Posterior cingulate gyrus (tissue), 11 donors: ENCODE measurements at regions of chr11 and their contacts with region 1.

Region 1: DNA sequence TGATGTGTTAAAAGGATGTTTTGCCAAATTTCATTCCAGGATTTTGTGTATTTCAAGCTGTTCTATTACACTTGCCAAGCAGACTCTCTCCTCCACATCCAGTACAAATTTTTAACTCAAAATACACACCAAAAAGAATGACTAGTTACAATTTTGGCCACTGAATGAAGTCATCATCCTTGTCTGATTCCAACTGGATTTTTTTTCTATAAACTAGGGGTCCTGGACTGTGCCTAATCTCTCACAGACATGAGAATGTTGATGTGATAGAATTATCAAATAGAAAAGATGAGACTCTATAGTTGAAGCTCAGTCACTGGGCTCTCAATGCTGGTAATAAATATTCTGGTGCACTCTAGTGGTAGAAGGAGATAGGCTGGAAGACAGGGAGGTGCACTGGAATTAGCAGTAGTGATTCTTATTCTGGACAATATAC is 85.8 kb downstream of the FANCF start:
- DNase-seq: no peak

Region 2: DNA sequence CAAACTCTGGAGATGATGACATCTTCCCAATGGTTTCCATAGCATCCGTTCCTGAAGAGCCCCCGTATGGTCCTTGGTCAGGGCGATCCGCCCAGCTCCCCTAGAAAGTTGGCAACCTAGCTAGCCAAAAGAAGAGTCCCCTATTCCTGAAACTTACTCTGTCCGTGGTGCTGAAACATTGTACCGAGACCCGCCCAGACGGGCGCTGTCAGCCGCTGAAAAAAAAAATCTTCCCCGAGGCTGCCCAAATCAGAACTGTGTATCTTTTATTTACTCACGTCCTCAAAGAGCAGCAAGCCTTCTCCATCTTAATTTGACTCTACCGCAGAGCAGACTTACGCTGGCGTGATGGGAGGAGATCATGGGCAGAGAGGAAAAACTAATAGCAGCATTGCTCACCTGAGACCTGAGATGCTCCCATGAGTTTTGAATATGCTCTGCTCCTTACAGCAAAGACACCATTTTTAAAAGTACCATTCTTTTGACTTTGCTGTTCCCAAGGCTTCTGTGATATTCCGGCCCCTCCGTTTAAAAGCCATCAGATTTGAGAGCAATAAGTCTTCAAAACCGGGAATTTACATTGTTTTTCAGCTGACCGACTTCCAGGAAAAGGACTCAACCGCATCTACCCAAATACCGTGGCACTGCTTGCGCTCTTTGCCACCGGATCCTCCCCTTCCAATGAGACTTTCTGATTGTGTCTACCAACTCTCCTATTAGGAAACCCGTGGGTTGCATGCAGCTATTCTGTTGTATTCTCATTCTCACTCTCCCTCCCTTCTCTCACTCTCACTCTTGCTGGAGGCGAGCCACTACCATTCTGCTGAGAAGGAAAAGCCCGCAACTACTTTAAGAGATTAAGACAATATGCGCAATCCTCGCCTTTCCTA is 202.0 kb before region 1 on chr11 and contains the start of gene SLC17A6:
- intact Hi-C with region 1: loop called (anchors 2 kb)
- DNase-seq: peak in 1 of 10 donors; percentile 72